GM23248 (cell line): ENCODE measurements at regions of chr1 and their contacts with region 1.

Region 1: DNA sequence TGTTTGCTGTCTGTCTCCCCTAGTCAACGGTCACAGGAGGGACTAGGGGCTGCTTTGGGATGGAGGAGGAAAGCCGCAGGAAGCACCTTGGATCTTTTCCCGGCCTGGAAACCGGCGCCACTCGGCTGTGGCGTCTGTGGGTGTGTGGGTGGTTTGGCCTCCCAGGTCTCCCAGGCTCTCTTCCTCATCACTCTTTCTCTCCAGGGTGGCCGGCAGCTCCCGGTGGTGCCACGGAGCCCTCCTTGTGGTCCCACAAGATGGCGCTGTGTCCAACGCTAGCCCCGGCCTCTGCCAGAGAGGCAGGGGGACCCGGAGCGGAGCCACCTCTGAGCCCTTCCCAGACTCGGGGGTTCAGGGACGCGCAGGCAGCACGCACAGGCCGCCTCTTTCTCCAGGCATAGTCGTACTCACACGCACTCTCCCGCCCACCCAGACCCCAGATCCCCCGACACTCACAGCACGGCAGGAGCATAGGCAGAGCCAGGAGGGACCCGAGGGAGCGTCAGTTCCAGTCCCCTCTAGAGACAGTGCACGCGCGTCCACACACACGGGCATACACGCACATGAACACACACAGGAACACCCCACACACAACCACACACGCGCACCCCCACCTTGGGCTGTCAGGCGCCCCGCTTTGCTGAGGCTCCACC is 31.2 kb downstream of the CDCP2 start:
- DNase-seq: peak; percentile 90
- H3K4me3 ChIP-seq: peak overlapping the region; percentile 59
- H3K27ac ChIP-seq: peak overlapping the region; percentile 74
- H3K4me1 ChIP-seq: peaks cover 21% of the 10 kb centered on the region
- H3K27me3 ChIP-seq: no peaks in the 10 kb centered on the region

Region 2: DNA sequence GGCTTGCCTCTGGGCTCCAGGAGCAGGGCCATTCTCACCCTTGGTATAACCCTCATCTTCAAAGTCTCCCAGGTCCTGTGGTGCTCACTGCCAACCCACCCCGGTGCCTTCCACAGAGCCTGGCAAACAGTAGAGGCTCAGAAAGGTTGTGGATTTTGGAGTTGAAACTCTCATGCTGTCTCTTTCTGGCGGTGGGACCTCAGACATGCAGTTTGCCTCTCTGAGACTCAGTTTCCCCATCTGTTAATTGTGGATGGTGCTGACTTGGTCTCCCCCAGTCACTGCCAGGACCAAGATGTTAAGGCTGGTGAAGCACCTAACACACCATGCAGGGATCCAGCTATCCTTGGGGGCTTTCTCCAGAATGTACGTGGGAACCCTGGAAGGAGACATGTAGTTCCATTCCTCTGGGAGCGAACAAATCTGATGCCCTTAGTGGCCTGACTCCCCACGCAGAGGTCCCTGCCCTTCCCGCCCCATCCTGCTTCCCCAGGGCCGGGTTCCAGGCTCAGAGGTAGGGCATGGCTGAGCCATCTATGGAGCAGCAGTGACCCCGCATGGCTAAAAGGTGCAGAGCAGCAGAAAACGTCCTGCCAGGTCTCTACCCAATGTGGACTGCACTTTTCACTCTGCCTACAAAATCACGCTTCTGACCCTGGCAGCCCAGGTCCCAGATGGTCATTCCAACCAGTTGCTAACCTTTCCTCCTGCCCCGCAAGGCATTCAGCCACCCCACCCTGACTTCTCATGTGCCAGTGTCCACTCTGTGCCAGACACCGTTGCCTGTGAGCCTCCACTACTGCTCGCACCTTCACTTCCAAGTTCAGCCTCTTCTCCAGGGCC is 688.7 kb after region 1 on chr1:
- in situ Hi-C with region 1: loop called (anchors 25 kb)
- DNase-seq: peak; percentile 79
- H3K4me3 ChIP-seq: no peak overlapping the region
- H3K27ac ChIP-seq: no peak overlapping the region
- H3K4me1 ChIP-seq: no peaks in the 10 kb centered on the region
- H3K27me3 ChIP-seq: no peaks in the 10 kb centered on the region